MCF 10A (cell line): ENCODE measurements at regions of chr10 and their contacts with region 1.

Region 1: DNA sequence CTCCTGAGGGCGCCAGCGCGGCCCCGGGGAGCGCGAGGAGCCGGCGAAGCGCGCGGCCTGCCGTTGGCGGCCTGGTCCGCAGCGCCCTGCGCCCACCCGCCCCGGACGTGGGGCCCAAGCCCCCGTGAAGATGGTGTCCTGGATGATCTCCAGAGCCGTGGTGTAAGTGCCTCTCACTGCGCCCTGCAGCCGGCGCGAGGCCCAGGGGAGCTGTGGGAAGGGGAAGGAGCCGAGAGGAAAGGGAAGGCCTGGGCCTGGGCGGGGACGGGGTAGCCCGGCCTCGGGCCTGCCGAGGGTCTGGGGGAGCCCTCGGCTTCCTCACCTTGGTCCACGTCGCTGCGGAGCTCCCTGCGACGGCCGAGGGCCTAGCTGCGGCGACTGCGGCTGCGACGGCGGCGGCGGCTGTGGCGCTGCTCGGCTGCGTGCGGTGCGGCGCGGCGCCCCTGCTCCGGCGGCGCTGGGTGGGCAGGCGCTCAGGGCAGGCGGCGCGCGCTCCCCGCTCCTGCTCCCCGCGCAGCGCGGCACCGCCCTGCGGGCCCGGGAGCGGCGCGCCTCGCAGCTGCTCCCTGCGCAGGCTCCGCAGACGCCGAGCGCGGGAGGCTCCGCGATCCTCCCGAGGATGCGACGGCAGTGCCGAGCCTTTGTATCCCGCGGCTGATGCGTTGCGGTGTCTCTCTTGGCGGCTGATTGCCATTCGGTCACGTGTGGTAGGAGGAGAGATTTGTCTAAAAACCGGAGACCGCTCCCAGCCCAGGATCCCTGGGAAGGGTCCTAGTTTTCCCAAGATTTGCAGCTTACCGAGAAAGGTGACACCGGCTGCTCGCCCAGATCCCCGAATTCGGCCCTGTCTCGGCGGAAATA is 445 bp downstream of the REEP3 start:
- DNase-seq: peak; percentile 65
- H3K4me3 Mint-ChIP-seq: peak overlapping the region; percentile 86
- H3K27ac Mint-ChIP-seq: peak overlapping the region; percentile 83
- H3K4me1 Mint-ChIP-seq: peaks cover 46% of the 10 kb centered on the region
- H3K27me3 Mint-ChIP-seq: no peaks in the 10 kb centered on the region
- CTCF ChIP-seq: no peak

Region 2: DNA sequence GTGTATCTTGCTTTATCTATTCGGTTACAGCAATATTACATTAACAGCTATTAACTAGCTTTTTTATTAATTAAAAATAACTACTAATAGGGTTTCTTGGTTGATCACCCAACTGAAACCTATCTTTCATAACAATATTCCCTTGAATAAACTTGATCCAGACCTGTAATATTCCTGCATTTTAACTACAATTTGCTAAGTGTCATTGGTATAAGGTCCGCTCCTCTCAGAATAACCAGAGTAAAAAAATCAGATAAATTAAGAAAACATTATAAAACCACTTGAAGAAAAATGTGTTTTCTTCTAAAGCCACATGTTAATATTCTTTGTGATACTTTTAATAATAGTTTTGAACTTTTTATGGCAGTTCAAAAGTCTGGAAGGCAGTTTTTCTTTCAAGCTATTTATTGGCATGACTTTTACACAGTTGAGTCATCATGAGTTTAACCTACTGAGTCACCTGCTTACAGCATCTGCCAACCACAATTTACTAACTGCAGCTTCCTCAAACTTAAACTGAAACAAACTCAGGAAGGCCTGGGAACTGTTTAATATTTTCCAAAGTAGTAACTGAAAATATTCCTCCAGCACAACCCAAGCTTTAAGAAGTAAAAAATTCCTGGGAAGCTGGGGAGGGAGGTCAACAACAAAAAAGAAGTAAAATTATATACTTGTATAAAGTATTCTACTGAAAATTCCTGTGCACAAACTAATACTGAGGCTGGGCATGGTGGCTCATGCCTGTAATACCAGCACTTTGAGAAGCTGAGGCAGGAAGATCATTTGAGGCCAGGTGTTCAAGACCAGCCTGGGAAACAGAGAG is 285.3 kb before region 1 on chr10:
- CTCF ChIA-PET with region 1: no interaction called
- POLR2A ChIA-PET with region 1: interaction called, 11 read pairs
- intact Hi-C with region 1: no loop called
- DNase-seq: peak; percentile 85
- H3K4me3 Mint-ChIP-seq: peak overlapping the region; percentile 19
- H3K27ac Mint-ChIP-seq: peak overlapping the region; percentile 64
- H3K4me1 Mint-ChIP-seq: peaks cover 24% of the 10 kb centered on the region
- H3K27me3 Mint-ChIP-seq: no peaks in the 10 kb centered on the region
- CTCF ChIP-seq: no peak

Region 3: GRCh38 chr10:63504125-63504880 is 17.3 kb before region 1 on chr10:
- CTCF ChIA-PET with region 1: interaction called, 4 read pairs
- POLR2A ChIA-PET with region 1: interaction called, 83 read pairs
- intact Hi-C with region 1: no loop called
- DNase-seq: peak; percentile 67
- H3K4me3 Mint-ChIP-seq: peak overlapping the region; percentile 4
- H3K27ac Mint-ChIP-seq: peak overlapping the region; percentile 60
- H3K4me1 Mint-ChIP-seq: peaks cover 20% of the 10 kb centered on the region
- H3K27me3 Mint-ChIP-seq: no peaks in the 10 kb centered on the region
- CTCF ChIP-seq: no peak

Region 4: DNA sequence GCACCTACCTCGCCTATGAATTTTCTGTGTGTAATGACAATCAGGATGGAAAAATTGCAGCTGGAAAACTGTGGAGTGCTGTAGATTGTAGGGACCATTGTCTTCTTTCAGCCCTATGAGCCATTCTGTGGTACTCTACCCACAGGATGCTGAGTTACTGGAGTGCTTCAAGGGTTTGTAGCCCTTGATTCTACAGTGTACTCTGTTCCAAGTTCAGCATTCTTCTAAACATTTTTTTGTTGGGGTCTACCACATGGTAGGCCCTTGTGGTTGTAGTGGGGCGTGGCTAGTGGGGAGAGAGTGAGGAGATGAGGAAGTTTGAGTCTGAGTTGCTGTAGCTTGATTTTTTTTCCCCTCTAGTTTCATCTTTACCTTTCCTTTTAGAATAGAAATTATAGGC is 33.0 kb after region 1 on chr10:
- CTCF ChIA-PET with region 1: interaction called, 3 read pairs
- POLR2A ChIA-PET with region 1: interaction called, 71 read pairs
- intact Hi-C with region 1: no loop called
- DNase-seq: peak; percentile 12
- H3K4me3 Mint-ChIP-seq: peak overlapping the region; percentile 56
- H3K27ac Mint-ChIP-seq: peak overlapping the region; percentile 90
- H3K4me1 Mint-ChIP-seq: peaks cover 41% of the 10 kb centered on the region
- H3K27me3 Mint-ChIP-seq: no peaks in the 10 kb centered on the region
- CTCF ChIP-seq: no peak